ENCODE measurements at regions of chr12 and their contacts with region 1.

Region 1: GRCh38 chr12:114508529-114509129 is 102.7 kb upstream of the TBX5 start:
- DNase-seq: peak; percentile 38 to 53 (median 51)
- H3K4me3 ChIP-seq: no peak overlapping the region
- H3K4me3 Mint-ChIP-seq: no peak overlapping the region
- H3K27ac ChIP-seq: no peak overlapping the region
- H3K27ac Mint-ChIP-seq: peak overlapping the region in 1 of 7 donors; percentile 7
- H3K4me1 ChIP-seq: no peaks in the 10 kb centered on the region
- H3K4me1 Mint-ChIP-seq: peaks cover 0 to 2% (median 0%) of the 10 kb centered on the region in 4 donors
- H3K27me3 ChIP-seq: no peaks in the 10 kb centered on the region
- H3K27me3 Mint-ChIP-seq: peaks cover 4 to 6% of the 10 kb centered on the region in 2 donors

Region 2: GRCh38 chr12:113462117-113462774 is 1046.4 kb before region 1 on chr12:
- CTCF ChIA-PET with region 1: interaction called, 4 read pairs
- POLR2A ChIA-PET with region 1: no interaction called
- intact Hi-C with region 1: loop called (anchors 5 kb)
- DNase-seq: peak in 4 of 5 donors; percentile 53 to 59 (median 55)
- H3K4me3 ChIP-seq: no peak overlapping the region
- H3K4me3 Mint-ChIP-seq: peak overlapping the region; percentile 77 to 95 (median 85)
- H3K27ac ChIP-seq: no peak overlapping the region
- H3K27ac Mint-ChIP-seq: peak overlapping the region in 1 of 7 donors; percentile 58
- H3K4me1 ChIP-seq: peaks cover 32% of the 10 kb centered on the region
- H3K4me1 Mint-ChIP-seq: peaks cover 17 to 38% (median 25%) of the 10 kb centered on the region in 4 donors
- H3K27me3 ChIP-seq: peaks cover 24% of the 10 kb centered on the region
- H3K27me3 Mint-ChIP-seq: peaks cover 42 to 52% of the 10 kb centered on the region in 2 donors

Region 3: DNA sequence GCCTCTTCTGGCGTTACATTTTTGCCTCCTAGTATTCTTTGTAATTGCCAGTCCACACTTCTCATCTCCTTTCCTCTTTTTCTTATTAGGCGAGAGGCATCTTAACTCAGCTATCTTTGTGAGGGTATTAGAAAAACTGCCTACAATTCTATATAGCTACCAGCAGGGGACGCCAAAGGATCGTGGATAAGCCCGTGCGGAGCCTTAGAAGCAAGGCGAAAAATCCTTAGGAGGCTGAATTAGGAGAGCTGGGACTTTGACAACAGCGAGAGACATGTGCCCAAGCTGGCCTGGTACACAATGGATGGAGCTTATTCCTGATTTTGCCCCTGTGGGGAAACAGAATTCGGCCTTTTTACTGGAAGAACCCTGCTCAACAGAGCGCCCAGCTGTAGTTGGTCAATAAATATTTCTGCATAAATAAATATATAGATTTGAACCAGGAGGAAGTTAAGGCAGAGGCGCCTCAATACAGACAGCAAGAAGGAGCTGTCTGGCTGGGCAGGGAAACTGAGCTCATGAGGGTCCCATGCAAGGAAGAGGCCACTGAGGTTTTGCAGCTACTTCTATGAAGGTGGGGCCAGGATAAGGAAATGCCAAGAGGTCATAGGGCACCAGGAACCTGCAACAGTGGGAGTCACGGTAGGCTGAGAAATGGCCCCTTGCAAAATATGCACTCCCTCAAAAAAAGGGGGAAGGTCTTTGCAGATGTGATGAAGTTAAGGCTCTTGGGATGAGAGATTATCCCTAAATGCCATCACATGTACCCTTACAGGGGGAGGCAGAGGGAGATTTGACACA is 527.9 kb before region 1 on chr12:
- CTCF ChIA-PET with region 1: interaction called, 26 read pairs
- POLR2A ChIA-PET with region 1: no interaction called
- intact Hi-C with region 1: no loop called
- DNase-seq: peak in 3 of 5 donors; percentile 10 to 15 (median 12)
- H3K4me3 ChIP-seq: no peak overlapping the region
- H3K4me3 Mint-ChIP-seq: no peak overlapping the region
- H3K27ac ChIP-seq: no peak overlapping the region
- H3K27ac Mint-ChIP-seq: no peak overlapping the region
- H3K4me1 ChIP-seq: no peaks in the 10 kb centered on the region
- H3K4me1 Mint-ChIP-seq: no peaks in the 10 kb centered on the region
- H3K27me3 ChIP-seq: no peaks in the 10 kb centered on the region
- H3K27me3 Mint-ChIP-seq: peaks cover 23 to 34% of the 10 kb centered on the region in 2 donors

Measured in CD4-positive, alpha-beta memory T cell (primary cell).